ENCODE measurements at regions of chr3 and their contacts with region 1.

Region 1: DNA sequence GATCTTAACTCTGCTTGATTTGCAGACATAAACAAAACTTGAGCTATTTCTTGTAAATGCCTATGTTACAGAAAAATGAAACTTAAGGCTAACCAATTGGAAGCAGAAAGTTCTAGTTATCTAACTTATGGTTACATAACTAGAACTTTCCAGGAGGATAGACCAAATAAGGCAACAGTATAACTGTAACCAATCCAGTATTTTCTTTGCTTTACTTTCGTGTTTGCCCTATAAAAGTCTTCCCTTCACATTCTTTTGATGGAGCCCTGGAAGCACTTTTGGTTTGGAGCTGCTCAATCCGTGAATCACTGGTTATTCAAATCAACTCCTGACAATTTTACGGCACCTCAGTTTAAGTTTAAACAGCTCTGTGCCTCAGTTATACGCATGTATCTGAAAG is 164.6 kb downstream of the SUCLG2 start:
- DNase-seq: no peak
- H3K4me3 ChIP-seq: no peak overlapping the region
- H3K27ac ChIP-seq: no peak overlapping the region
- H3K4me1 ChIP-seq: no peaks in the 10 kb centered on the region
- CTCF ChIP-seq: no peak

Region 2: DNA sequence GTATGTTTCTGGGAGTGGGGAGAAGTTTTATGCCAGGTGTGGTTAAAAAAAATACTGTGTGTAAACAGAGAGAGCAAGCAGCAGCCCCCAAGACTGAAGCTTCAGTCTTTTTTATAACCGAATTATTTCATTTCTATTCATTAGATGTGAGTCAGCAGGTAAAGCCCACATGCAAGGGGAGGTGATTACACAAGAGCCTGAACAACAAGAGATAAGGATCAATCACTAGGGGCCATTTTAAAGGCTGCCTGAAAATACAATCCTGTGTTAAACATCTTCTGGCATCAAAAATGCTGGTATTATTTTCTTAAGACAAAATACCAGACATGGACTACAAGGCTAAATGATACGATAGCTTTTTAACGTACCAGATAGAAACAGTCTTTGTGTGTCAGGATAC is 52.7 kb before region 1 on chr3:
- CTCF ChIA-PET with region 1: no interaction called
- POLR2A ChIA-PET with region 1: no interaction called
- intact Hi-C with region 1: no loop called
- DNase-seq: no peak
- H3K4me3 ChIP-seq: no peak overlapping the region
- H3K27ac ChIP-seq: no peak overlapping the region
- H3K4me1 ChIP-seq: peaks cover 8% of the 10 kb centered on the region
- CTCF ChIP-seq: no peak

Region 3: GRCh38 chr3:67468511-67468910 is 21.3 kb before region 1 on chr3:
- CTCF ChIA-PET with region 1: no interaction called
- POLR2A ChIA-PET with region 1: no interaction called
- intact Hi-C with region 1: no loop called
- DNase-seq: no peak
- H3K4me3 ChIP-seq: no peak overlapping the region
- H3K27ac ChIP-seq: no peak overlapping the region
- H3K4me1 ChIP-seq: no peaks in the 10 kb centered on the region
- CTCF ChIP-seq: no peak

Region 4: DNA sequence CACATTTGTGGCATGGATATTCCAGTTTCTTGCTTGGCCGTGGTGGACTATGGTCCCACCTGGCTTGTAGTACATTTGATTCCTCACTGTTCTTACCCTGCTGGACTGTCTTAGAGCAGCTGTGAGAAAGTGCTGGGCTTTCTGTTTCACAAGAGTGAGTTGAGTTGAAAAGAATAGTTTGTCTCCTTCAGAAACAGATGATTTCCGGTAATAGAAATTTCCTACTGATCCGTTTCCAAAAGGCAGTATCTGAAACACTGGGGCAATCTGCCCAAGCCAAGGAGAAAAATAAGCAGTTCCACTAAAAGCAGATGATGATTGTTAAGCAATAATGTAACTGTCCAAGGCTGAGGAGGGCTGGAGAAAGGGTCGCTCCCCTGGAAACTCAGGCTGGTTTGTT is 68.6 kb after region 1 on chr3:
- CTCF ChIA-PET with region 1: no interaction called
- POLR2A ChIA-PET with region 1: no interaction called
- intact Hi-C with region 1: loop called (anchors 5 kb)
- DNase-seq: no peak
- H3K4me3 ChIP-seq: no peak overlapping the region
- H3K27ac ChIP-seq: no peak overlapping the region
- H3K4me1 ChIP-seq: peaks cover 5% of the 10 kb centered on the region
- CTCF ChIP-seq: no peak

Measured in OCI-LY7 (cell line).